Activated CD4-positive, alpha-beta memory T cell treated with anti-CD3 and anti-CD28 coated beads for 36 hours (primary cell): ENCODE measurements at regions of chr17 and their contacts with region 1.

Region 1: DNA sequence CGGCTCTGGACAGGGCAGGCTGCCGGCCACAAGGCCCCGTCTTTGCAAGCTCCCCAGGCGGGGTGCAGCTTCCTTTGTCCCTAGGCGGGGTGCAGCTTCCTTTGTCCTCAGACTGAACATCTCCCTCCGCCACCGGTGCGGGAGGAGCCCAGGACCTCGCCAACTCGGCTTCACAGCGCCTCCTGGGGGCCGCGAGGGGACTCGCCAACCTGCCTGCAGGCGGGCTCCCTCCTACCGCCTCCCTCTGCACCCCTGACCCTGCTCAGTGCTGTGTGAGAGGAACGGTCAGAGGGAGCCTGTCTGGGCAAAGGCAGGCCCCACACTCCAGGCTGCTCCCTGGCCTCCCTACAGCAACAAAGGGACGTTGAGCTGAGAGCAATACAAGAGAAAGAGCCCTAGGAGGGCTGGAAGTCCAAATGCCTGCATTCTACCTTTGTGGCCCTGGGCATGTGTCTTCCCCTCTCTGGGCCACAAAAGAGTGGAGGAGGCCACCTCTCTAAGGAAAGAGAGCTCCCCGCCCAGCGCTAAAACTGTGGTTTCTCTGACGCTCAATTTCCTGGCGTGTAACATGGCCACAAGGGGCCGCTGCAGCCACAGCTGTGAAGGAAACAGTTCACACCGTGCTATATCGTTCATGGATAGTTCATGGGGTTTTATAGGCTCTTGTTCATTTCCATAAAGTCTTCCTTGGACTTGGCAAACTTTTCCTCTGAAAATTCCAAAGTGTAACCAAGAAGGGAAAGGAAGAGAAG is 20.9 kb upstream of the KRT19 start:
- DNase-seq: peak; percentile 91
- H3K4me3 Mint-ChIP-seq: no peak overlapping the region
- H3K27ac Mint-ChIP-seq: peak overlapping the region; percentile 70
- H3K4me1 Mint-ChIP-seq: peaks cover 21% of the 10 kb centered on the region
- H3K27me3 Mint-ChIP-seq: peaks cover 7% of the 10 kb centered on the region

Region 2: GRCh38 chr17:40818733-40819527 is 730.1 kb before region 1 on chr17:
- CTCF ChIA-PET with region 1: interaction called, 15 read pairs
- POLR2A ChIA-PET with region 1: no interaction called
- intact Hi-C with region 1: no loop called
- DNase-seq: peak; percentile 91
- H3K4me3 Mint-ChIP-seq: peak overlapping the region; percentile 87
- H3K27ac Mint-ChIP-seq: peak overlapping the region; percentile 94
- H3K4me1 Mint-ChIP-seq: peaks cover 18% of the 10 kb centered on the region
- H3K27me3 Mint-ChIP-seq: peaks cover 7% of the 10 kb centered on the region

Region 3: GRCh38 chr17:41403798-41404671 is 145.0 kb before region 1 on chr17:
- CTCF ChIA-PET with region 1: interaction called, 24 read pairs
- POLR2A ChIA-PET with region 1: no interaction called
- intact Hi-C with region 1: loop called (anchors 1 kb)
- DNase-seq: peak; percentile 84
- H3K4me3 Mint-ChIP-seq: peak overlapping the region; percentile 17
- H3K27ac Mint-ChIP-seq: peak overlapping the region; percentile 86
- H3K4me1 Mint-ChIP-seq: peaks cover 42% of the 10 kb centered on the region
- H3K27me3 Mint-ChIP-seq: no peaks in the 10 kb centered on the region

Region 4: GRCh38 chr17:41496820-41497408 is 52.1 kb before region 1 on chr17:
- CTCF ChIA-PET with region 1: interaction called, 15 read pairs
- POLR2A ChIA-PET with region 1: interaction called, 3 read pairs
- intact Hi-C with region 1: loop called (anchors 2 kb)
- DNase-seq: peak; percentile 89
- H3K4me3 Mint-ChIP-seq: no peak overlapping the region
- H3K27ac Mint-ChIP-seq: no peak overlapping the region
- H3K4me1 Mint-ChIP-seq: peaks cover 12% of the 10 kb centered on the region
- H3K27me3 Mint-ChIP-seq: no peaks in the 10 kb centered on the region

Region 5: DNA sequence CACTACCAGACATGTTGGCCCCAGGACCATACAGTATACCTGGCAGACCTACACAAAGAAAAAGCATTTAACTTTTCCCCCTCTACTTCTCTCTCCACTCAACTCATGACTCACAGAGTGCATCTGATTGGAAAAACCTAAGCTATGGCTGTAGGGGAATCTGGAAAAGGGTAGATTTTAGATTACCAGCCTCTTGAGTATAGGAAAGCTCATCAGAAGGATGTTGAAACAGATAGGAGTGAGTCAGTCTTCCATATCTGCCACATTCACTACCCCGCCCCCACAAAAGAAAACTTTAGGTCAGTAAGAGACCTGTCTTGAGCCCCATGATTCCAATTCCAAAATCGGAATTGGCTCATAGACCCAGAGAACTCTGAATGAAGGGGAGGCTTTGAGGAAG is 10.5 kb after region 1 on chr17:
- CTCF ChIA-PET with region 1: interaction called, 36 read pairs
- POLR2A ChIA-PET with region 1: no interaction called
- intact Hi-C with region 1: no loop called
- DNase-seq: no peak
- H3K4me3 Mint-ChIP-seq: no peak overlapping the region
- H3K27ac Mint-ChIP-seq: no peak overlapping the region
- H3K4me1 Mint-ChIP-seq: no peaks in the 10 kb centered on the region
- H3K27me3 Mint-ChIP-seq: peaks cover 23% of the 10 kb centered on the region

Region 6: GRCh38 chr17:41602524-41602923 is 53.5 kb after region 1 on chr17:
- CTCF ChIA-PET with region 1: interaction called, 10 read pairs
- POLR2A ChIA-PET with region 1: no interaction called
- intact Hi-C with region 1: no loop called
- DNase-seq: no peak
- H3K4me3 Mint-ChIP-seq: no peak overlapping the region
- H3K27ac Mint-ChIP-seq: no peak overlapping the region
- H3K4me1 Mint-ChIP-seq: no peaks in the 10 kb centered on the region
- H3K27me3 Mint-ChIP-seq: peaks cover 18% of the 10 kb centered on the region

Region 7: DNA sequence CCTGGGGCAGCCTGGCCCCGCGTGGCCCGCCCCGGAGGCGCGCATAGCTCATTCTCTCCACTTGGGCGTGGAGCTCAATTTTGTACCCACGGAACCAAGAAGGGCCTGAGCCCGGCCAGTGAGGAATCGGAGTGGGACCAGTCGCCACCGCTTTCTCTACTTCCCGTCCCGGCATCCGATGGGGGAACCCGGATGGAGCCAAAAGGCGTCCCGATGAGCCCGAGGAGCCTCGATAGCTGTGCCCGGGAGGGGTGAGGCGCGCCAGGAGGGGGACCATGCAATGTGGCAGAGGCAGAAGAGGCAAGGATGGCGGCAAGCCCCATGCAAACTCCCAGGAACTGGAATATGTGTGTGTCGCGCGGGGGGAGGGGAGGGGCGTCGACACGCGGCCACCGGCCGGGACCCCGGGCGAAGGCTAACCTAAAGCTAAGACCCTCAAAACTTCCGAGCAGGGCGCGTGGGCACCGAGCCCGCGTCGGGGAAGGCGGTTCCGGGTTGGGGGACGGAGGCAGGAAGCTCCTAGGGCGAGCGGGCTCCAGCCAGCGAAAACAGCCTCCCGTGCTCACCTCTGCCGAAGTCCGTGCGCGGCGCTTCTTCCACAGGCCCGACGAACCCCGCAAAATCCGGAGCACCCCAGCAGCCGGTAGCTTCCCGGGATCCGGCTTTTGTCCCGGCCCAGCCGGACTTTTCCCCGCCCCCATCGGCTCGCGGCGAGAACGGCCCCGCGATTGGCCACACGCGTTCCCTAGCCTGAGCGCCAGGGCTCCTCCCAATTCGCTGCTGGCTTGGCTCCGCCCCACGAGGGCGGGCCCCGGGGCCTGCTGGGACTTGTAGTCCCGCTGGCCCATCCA is 369.5 kb after region 1 on chr17 and contains the start of gene ACLY:
- CTCF ChIA-PET with region 1: no interaction called
- POLR2A ChIA-PET with region 1: no interaction called
- intact Hi-C with region 1: no loop called
- DNase-seq: peak; percentile 98
- H3K4me3 Mint-ChIP-seq: peak within 1 kb of the TSS; percentile 95
- H3K27ac Mint-ChIP-seq: peak within 1 kb of the TSS; percentile 86
- H3K4me1 Mint-ChIP-seq: peaks cover 35% of the 10 kb centered on the region
- H3K27me3 Mint-ChIP-seq: no peaks in the 10 kb centered on the region
- total RNA-seq, gene ACLY: 186 to 203 TPM